HepG2 (cell line): ENCODE measurements at regions of chr19 and their contacts with region 1.

Region 1: DNA sequence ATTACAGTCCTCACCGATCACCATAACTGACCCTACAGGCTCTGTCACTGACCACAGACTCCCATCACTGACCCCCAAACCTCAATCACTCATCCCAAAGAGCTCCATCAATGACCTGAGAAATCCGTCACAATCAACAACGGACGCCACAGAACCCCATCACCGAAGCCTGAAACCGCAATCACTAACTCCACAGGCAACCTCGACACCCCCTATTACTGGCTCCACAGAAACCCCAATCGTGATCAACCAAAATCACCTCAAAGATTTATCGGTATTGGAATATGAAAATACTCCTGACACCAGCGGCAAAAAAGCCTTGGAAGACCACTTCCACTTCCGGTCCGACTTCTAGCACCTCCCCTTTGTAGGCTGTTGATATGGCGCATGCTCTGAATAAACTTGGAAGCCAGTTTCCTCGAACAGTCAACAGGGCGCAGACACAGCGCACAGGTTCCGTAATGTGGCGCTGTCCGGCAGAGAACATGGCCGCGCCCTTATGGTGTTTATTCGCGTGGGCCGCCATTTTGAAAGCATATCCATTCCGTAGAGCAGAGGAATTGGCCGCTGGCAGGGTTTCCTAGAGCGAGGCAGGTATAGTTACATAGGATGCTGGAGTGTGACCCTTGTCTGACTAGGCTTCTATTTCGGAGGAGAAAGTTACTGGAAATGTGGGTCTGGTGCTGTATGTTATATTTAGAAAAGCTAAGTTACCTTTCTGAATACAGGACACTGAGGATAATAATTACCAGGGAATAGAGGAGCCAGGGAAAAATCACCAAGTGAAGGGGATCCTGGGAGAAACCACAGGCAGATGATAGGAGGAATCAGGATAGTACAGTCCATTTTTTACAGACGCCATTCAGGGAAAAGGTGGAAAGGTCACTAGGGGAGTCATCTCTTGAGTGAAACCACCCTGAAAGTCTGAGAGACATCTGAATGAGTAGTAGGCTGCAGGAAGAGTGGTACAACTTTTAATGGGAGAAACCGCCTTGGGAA is at the start of gene ZNF585A:
- DNase-seq: peak; percentile 97
- ATAC-seq: peak; percentile 99
- H3K4me3 ChIP-seq: peak within 1 kb of the TSS; percentile 64 to 95 (median 82)
- H3K27ac ChIP-seq: peak within 1 kb of the TSS; percentile 54
- H3K4me1 ChIP-seq: no peaks in the 10 kb centered on the region; the same call in 1 of the 2 replicates
- H3K27me3 ChIP-seq: no peaks in the 10 kb centered on the region; a peak in 1 of 5 replicates
- CTCF ChIP-seq: peak; percentile 49
- EP300 ChIP-seq: no peak
- POLR2A ChIP-seq: peak; percentile 55 to 68
- RAD21 ChIP-seq: no peak
- total RNA-seq, gene ZNF585A: 7.1 and 14.0 TPM in 2 replicates

Region 2: DNA sequence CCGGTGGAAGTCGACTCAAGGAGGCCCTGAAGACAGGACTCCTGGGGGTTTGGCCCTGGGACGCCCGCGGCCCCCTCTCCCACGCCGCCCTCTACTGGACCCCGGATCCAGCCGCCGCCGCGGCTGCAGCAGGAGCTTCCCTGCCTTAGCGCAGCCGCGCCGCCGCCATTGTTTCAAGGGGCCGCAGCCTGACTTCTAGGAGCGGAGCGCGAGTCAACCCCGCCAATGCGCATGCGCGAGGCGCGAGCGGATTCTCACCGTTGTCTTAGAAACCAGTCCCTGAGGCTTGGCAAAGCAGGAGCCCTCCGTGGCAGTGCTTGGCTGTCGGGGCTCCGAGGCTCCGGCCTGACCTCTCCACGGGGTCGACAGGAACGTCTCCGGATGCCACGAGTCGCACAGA is 113.5 kb before region 1 on chr19:
- CTCF ChIA-PET with region 1: no interaction called
- POLR2A ChIA-PET with region 1: no interaction called
- in situ Hi-C with region 1: no loop called
- intact Hi-C with region 1: no loop called
- DNase-seq: no peak
- ATAC-seq: no peak
- H3K4me3 ChIP-seq: no peak overlapping the region
- H3K27ac ChIP-seq: no peak overlapping the region
- H3K4me1 ChIP-seq: no peaks in the 10 kb centered on the region
- H3K27me3 ChIP-seq: no peaks in the 10 kb centered on the region
- CTCF ChIP-seq: no peak
- EP300 ChIP-seq: no peak
- POLR2A ChIP-seq: no peak
- RAD21 ChIP-seq: no peak

Region 3: DNA sequence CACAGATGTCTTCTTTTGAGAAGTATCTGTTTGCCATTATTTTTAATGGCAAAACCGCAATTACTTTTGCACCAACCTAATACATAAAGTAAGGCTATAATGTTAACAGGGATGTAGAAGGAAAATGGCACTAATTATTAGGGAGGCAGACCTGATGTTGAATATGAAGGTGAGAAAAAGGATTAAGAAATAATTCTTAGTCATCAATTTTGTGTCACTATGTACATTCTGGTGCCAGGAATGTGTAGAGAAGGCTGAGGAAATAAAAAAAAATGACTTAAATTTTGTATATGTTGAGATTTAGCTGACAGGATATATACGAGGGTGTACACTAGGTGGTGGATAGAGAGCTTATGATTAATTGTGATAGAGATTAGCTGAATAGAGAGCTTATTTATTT is 25.1 kb after region 1 on chr19:
- CTCF ChIA-PET with region 1: no interaction called
- POLR2A ChIA-PET with region 1: no interaction called
- in situ Hi-C with region 1: no loop called
- intact Hi-C with region 1: no loop called
- DNase-seq: no peak
- ATAC-seq: no peak
- H3K4me3 ChIP-seq: no peak overlapping the region
- H3K27ac ChIP-seq: no peak overlapping the region
- H3K4me1 ChIP-seq: no peaks in the 10 kb centered on the region
- H3K27me3 ChIP-seq: no peaks in the 10 kb centered on the region
- CTCF ChIP-seq: no peak
- EP300 ChIP-seq: no peak
- POLR2A ChIP-seq: no peak
- RAD21 ChIP-seq: no peak

Region 4: GRCh38 chr19:37217855-37218591 is 45.4 kb after region 1 on chr19 and contains the start of gene ZNF383:
- CTCF ChIA-PET with region 1: no interaction called
- POLR2A ChIA-PET with region 1: interaction called, 6 read pairs
- in situ Hi-C with region 1: no loop called
- intact Hi-C with region 1: loop called (anchors 1 kb)
- DNase-seq: peak; percentile 92
- ATAC-seq: peak; percentile 99
- H3K4me3 ChIP-seq: peak within 1 kb of the TSS; percentile 85 to 96 (median 88)
- H3K27ac ChIP-seq: peak within 1 kb of the TSS; percentile 89
- H3K4me1 ChIP-seq: peaks cover 12% of the 10 kb centered on the region
- H3K27me3 ChIP-seq: peaks cover 0 to 4% of the 10 kb centered on the region in 2 experiments; a peak in 1 of 5 replicates
- CTCF ChIP-seq: no peak
- EP300 ChIP-seq: no peak
- POLR2A ChIP-seq: peak; percentile 86 to 91
- RAD21 ChIP-seq: peak; percentile 36; the same call in 1 of the 2 replicates
- total RNA-seq, gene ZNF383: 3.7 and 4.1 TPM in 2 replicates